Breast epithelium (tissue), 4 donors: ENCODE measurements at regions of chr3 and their contacts with region 1.

Region 1: DNA sequence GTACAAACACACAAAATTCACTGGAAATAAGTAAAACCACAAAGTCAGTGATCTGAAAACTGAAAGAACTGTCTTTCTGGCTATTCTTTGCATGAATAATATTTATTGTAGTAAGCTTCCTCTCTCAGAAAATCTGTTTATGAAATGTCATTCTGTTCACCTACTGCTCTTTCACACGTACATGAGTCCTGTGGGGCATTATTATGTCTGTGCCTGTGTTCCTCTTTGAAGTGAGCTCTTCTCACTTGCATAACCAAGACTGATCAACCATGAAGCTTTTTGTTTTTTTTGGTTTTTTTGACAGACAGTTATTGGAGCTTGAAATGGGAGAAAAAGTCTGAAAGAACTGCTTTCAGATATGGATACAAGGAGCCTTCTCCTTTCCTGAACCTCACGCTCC is 195.8 kb downstream of the PLCH1 start:
- DNase-seq: no peak
- H3K4me3 ChIP-seq: no peak overlapping the region
- H3K27ac ChIP-seq: no peak overlapping the region
- H3K4me1 ChIP-seq: no peaks in the 10 kb centered on the region
- H3K27me3 ChIP-seq: no peaks in the 10 kb centered on the region
- CTCF ChIP-seq: no peak
- POLR2A ChIP-seq: no peak

Region 2: GRCh38 chr3:155688481-155688880 is 139.4 kb after region 1 on chr3:
- intact Hi-C with region 1: loop called (anchors 2 kb)
- DNase-seq: no peak
- H3K4me3 ChIP-seq: no peak overlapping the region
- H3K27ac ChIP-seq: no peak overlapping the region
- H3K4me1 ChIP-seq: no peaks in the 10 kb centered on the region
- H3K27me3 ChIP-seq: no peaks in the 10 kb centered on the region
- CTCF ChIP-seq: no peak
- POLR2A ChIP-seq: no peak

Region 3: DNA sequence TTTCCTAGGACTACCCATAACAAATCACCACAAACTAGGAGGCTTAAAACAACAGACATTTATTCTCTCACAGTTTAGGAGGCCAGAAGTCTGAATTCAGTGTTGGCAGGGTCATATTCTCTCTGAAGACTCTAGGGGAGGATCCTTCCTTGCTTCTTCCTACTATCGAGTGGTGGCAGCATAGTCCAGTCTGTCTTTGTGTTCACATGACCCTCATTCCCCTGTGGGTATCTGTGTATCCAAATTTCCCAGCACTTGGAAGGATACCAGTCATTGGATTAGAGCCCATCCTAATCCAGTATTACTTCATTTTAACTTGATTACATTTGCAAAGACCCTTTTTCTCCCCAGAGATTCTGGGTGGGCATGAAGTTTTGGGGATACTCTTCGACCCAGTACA is 385.1 kb after region 1 on chr3:
- intact Hi-C with region 1: no loop called
- DNase-seq: no peak
- H3K4me3 ChIP-seq: no peak overlapping the region
- H3K27ac ChIP-seq: peak overlapping the region in 1 of 2 donors; percentile 11
- H3K4me1 ChIP-seq: no peaks in the 10 kb centered on the region
- H3K27me3 ChIP-seq: no peaks in the 10 kb centered on the region
- CTCF ChIP-seq: no peak
- POLR2A ChIP-seq: no peak